Naive thymus-derived CD8-positive, alpha-beta T cell (primary cell): ENCODE measurements at regions of chr11 and their contacts with region 1.

Region 1: DNA sequence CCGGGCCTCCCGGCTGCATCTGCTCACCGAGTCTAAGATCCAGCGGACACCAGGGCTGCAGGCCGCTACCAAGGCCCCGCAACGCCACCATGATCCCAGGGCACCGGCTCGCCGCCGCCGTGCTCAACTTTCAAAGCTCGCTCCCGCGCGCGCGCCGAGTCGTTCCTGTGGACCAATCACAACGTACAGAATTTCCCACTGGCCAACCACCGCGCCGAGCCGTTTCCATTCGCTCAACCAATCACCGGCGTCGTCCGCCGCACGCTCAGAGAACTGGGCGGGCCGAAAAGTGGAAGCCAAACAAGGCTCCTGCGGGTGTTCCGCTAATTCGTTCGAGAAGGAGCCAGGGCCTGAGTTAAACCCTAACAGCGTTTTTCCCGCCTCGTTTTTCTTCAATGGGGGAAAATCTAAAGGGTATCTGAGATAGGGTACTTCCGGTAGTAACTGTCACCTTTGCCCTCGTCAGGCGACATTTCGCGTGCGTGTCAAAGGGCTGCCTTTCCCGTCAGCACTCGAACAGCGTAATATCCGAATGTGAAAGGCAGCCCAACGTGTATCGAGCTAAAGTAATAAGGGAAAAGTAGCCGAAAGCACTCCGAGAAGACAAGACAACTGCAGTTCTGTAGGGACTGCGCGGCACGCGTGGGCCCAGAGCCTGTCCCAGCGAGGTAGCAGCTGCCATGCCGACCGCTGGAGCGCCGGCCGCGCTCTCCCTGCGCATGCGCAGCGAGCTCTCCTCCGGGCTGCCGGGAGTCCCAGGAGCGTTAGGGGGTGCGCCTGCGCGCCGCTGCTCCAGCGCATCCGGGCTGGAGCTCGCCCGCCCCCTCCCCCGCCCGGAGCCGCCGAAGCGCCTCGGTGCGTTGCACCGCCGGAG is at the starts of genes NCAPD3 and VPS26B:
- DNase-seq: peak; percentile 92 to 97 (median 94)
- ATAC-seq: peak; percentile 81 to 83
- H3K4me3 Mint-ChIP-seq: peak within 1 kb of the TSS; percentile 94 to 98 (median 96)
- H3K27ac Mint-ChIP-seq: peak within 1 kb of the TSS; percentile 97 to 99 (median 99)
- H3K4me1 Mint-ChIP-seq: peaks cover 44 to 61% (median 59%) of the 10 kb centered on the region in 4 donors
- H3K27me3 Mint-ChIP-seq: no peaks in the 10 kb centered on the region
- polyA plus RNA-seq, gene NCAPD3: 11.2 to 16.5 (median 14.2) TPM
- polyA plus RNA-seq, gene VPS26B: 47.8 to 62.5 (median 57.7) TPM

Region 2: DNA sequence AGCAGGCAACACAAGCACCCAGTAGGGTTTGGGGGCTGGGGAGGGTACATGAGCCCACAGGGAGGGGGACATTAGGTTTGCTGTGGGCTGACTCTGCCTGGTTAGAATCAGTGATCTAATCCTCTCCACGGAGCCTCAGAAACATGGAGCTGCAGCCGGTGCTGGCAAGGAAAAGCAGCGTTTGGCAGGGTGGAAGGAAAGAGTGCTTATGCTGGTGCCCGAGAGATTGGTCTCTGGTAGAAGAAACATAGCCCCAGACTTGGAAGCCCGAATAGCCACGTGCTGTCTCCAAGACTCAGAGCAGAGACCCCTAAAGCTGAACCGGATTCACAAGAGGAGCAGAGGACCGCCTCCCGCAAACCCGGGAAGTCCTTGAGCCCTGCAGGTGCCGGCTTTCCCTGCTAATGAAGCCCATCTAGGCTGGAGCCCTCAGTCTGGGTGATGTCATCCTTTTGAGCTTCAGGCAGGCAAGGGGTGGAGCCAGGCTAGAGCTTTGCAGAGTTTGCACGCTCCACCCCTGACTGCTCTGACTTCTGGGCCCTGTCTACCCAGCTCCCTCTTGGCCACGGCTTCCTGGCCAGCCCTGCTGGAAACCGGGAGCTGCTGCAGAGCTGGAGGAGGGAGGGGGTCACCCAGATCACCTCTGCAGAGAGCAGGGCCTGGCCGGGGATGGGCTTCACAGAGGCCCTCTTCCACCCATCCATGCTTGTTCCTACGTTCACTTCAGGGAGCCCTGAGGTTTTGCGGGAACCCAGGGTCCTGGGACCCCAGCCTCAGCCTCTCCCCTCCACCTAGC is 190.2 kb before region 1 on chr11:
- POLR2A ChIA-PET with region 1: interaction called, 14 read pairs
- DNase-seq: peak; percentile 50 to 83 (median 64)
- ATAC-seq: peak; percentile 76 to 82
- H3K4me3 Mint-ChIP-seq: peak overlapping the region; percentile 61 to 94 (median 77)
- H3K27ac Mint-ChIP-seq: peak overlapping the region; percentile 75 to 99 (median 95)
- H3K4me1 Mint-ChIP-seq: peaks cover 50 to 90% (median 78%) of the 10 kb centered on the region in 4 donors
- H3K27me3 Mint-ChIP-seq: peaks cover 0 to 10% (median 0%) of the 10 kb centered on the region in 5 donors

Region 3: GRCh38 chr11:134132793-134133192 is 91.3 kb before region 1 on chr11:
- POLR2A ChIA-PET with region 1: no interaction called
- DNase-seq: no peak
- ATAC-seq: no peak
- H3K4me3 Mint-ChIP-seq: no peak overlapping the region
- H3K27ac Mint-ChIP-seq: no peak overlapping the region
- H3K4me1 Mint-ChIP-seq: no peaks in the 10 kb centered on the region
- H3K27me3 Mint-ChIP-seq: peaks cover 0 to 3% (median 0%) of the 10 kb centered on the region in 5 donors

Region 4: DNA sequence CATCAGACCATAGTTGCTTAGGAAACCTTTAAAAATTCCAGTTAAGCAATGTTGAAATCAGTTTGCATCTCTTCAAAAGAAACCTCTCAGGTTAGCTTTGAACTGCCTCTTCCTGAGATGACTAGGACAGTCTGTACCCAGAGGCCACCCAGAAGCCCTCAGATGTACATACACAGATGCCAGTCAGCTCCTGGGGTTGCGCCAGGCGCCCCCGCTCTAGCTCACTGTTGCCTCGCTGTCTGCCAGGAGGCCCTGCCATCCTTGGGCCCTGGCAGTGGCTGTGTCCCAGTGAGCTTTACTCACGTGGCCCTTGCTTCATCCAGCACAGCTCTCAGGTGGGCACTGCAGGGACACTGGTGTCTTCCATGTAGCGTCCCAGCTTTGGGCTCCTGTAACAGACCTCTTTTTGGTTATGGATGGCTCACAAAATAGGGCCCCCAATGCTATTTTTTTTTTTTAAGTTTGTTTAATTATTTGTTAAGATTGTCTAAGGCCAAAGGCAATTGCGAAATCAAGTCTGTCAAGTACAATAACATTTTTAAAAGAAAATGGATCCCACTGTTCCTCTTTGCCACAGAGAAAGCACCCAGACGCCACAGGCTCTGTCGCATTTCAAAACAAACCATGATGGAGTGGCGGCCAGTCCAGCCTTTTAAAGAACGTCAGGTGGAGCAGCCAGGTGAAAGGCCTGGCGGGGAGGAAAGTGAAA is 73.7 kb before region 1 on chr11:
- POLR2A ChIA-PET with region 1: no interaction called
- DNase-seq: no peak
- ATAC-seq: no peak
- H3K4me3 Mint-ChIP-seq: no peak overlapping the region
- H3K27ac Mint-ChIP-seq: peak overlapping the region in 4 of 10 donors; percentile 34 to 56 (median 37)
- H3K4me1 Mint-ChIP-seq: peaks cover 0 to 3% (median 0%) of the 10 kb centered on the region in 4 donors
- H3K27me3 Mint-ChIP-seq: no peaks in the 10 kb centered on the region

Region 5: DNA sequence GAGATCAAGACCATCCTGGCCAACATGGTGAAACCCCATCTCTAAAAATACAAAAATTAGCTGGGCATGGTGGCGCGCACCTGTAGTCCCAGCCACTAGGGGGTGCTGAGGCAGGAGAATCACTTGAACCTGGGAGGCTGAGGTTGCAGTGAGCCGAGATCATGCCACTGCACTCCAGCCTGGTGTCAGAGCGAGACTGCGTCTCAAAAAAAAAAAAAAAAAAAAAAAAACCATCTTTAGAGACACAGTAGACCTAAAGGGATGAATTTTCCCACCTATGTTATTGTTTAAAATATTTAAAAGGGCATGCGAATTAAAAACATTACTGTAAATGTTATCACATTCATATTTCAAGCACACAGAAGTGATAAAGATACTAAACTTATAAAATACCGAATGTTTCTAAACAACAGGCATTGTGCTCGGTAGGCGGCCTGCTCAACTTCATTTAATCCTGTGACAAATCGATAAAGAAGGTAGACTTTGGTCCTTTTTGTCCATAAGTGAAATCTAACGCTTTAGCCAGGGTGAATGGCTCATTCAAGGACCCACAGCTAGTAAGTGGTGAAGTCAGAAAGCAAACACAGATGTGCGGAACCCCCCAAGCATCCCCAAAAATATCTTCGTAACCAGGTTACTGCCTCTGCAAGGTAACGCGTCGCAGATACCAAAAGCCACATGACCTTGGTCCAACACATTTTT is 16.4 kb before region 1 on chr11:
- POLR2A ChIA-PET with region 1: interaction called, 14 read pairs
- DNase-seq: peak; percentile 44 to 78 (median 62)
- ATAC-seq: peak; percentile 36 to 46
- H3K4me3 Mint-ChIP-seq: no peak overlapping the region
- H3K27ac Mint-ChIP-seq: peak overlapping the region in 1 of 10 donors; percentile 27
- H3K4me1 Mint-ChIP-seq: peaks cover 4 to 10% (median 8%) of the 10 kb centered on the region in 4 donors
- H3K27me3 Mint-ChIP-seq: no peaks in the 10 kb centered on the region

Region 6: GRCh38 chr11:134253188-134253993 is 29.3 kb after region 1 on chr11 and contains the starts of genes ACAD8 and THYN1:
- POLR2A ChIA-PET with region 1: interaction called, 115 read pairs
- DNase-seq: peak; percentile 90 to 98 (median 96)
- ATAC-seq: peak; percentile 98 to 99
- H3K4me3 Mint-ChIP-seq: peak within 1 kb of the TSS; percentile 91 to 100 (median 96)
- H3K27ac Mint-ChIP-seq: peak within 1 kb of the TSS; percentile 80 to 97 (median 94)
- H3K4me1 Mint-ChIP-seq: peaks cover 18 to 44% (median 40%) of the 10 kb centered on the region in 4 donors
- H3K27me3 Mint-ChIP-seq: no peaks in the 10 kb centered on the region
- polyA plus RNA-seq, gene ACAD8: 21.0 to 24.0 (median 22.6) TPM
- polyA plus RNA-seq, gene THYN1: 172 to 207 (median 197) TPM

Region 7: GRCh38 chr11:134275534-134276395 is 51.7 kb after region 1 on chr11 and contains the start of gene GLB1L3:
- POLR2A ChIA-PET with region 1: interaction called, 41 read pairs
- DNase-seq: peak; percentile 52 to 86 (median 78)
- ATAC-seq: peak; percentile 90 to 91
- H3K4me3 Mint-ChIP-seq: peak within 1 kb of the TSS; percentile 86 to 99 (median 94)
- H3K27ac Mint-ChIP-seq: peak within 1 kb of the TSS; percentile 64 to 95 (median 92)
- H3K4me1 Mint-ChIP-seq: peaks cover 18 to 54% (median 44%) of the 10 kb centered on the region in 4 donors
- H3K27me3 Mint-ChIP-seq: peaks cover 0 to 38% (median 0%) of the 10 kb centered on the region in 5 donors
- polyA plus RNA-seq, gene GLB1L3: 2.0 to 2.5 (median 2.2) TPM